Activated T-helper 2 cell treated with anti-CD3 and anti-CD28 coated beads, Interferon-gamma antibody, Interleukin-2, Interleukin-4, amounts not matched to agents 10 μg/mL and 5 μg/mL and 100 μg/mL, durations not matched to agents 14 hours and 24 hours and 36 hours (primary cell): ENCODE measurements at regions of chr20 and their contacts with region 1.

Region 1: GRCh38 chr20:56995576-56996075 is 270.8 kb downstream of the BMP7 start:
- DNase-seq: no peak
- H3K4me3 Mint-ChIP-seq: no peak overlapping the region
- H3K27ac Mint-ChIP-seq: no peak overlapping the region
- H3K4me1 Mint-ChIP-seq: no peaks in the 10 kb centered on the region
- H3K27me3 Mint-ChIP-seq: no peaks in the 10 kb centered on the region

Region 2: DNA sequence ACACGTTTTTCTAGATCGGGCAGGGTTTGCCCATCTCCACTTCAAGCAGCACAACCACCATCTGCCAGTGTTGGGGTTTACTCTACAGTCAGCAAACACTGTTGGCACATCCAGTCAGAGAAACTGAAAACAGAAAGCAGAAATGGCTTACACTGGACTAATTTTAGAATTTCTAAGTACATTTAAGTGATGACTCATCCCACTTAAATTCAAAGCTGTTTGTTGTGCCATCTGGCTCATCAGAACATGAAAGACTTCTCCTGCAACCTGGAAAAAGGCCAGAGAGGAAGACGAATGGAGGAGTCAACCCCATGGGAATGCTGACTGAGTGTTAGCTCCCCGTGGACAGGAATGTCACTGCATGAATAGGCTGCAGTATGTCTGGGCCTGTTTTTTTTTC is 440.8 kb before region 1 on chr20:
- intact Hi-C with region 1: loop called (anchors 10 kb)
- DNase-seq: no peak
- H3K4me3 Mint-ChIP-seq: no peak overlapping the region
- H3K27ac Mint-ChIP-seq: no peak overlapping the region
- H3K4me1 Mint-ChIP-seq: peaks cover 8% of the 10 kb centered on the region
- H3K27me3 Mint-ChIP-seq: peaks cover 3% of the 10 kb centered on the region

Region 3: DNA sequence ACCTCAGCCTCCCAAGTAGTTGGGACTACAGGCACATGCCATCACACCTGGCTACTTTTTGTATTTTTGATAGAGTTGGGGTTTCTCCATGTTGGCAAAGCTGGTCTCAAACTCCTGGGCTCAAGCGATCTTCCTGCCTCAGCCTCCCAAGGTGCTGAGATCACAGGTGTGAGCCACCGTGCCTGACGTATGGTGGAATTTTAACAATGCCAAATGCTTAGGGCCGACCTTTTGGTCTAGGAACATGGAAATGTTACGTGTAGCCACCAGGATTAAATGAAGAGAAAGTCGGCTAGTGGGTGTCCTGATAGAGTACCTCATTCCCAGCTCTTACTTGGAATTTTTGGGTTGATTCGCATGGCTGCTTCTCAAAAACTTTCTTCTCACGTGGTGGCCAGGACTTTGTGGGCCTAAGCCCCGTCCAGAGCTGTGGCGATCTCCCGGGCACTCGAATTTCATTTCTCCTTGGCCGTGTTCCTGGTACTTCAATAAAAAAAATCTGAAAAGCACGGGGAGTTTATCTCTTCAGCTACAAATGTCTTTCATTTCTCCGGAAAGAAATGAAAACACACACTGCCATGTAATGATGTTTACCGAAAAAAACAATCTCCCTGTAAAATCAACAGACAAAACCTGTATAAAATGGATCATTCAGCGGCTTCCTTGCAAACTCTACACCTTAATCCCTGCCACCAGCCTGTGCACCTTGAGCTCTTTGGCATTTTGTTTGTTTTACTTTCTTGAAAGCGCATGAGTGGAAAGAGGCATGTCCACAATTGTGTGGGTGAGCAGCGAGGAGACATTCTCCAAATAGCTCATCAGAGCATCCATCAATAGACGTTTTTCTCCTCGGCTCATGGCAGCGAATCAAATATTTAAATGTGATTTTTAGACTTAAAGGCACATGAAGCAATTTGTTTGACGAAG is 193.6 kb before region 1 on chr20:
- intact Hi-C with region 1: no loop called
- DNase-seq: no peak
- H3K4me3 Mint-ChIP-seq: no peak overlapping the region
- H3K27ac Mint-ChIP-seq: no peak overlapping the region
- H3K4me1 Mint-ChIP-seq: no peaks in the 10 kb centered on the region
- H3K27me3 Mint-ChIP-seq: peaks cover 1% of the 10 kb centered on the region